ENCODE measurements at regions of chr12 and their contacts with region 1.

Region 1: GRCh38 chr12:89098441-89099112 is 253.7 kb downstream of the DUSP6 start:
- DNase-seq: no peak

Region 2: GRCh38 chr12:89156862-89157262 is 58.3 kb after region 1 on chr12:
- intact Hi-C with region 1: loop called in 1 of 2 experiments (anchors 2 kb)
- DNase-seq: no peak

Region 3: DNA sequence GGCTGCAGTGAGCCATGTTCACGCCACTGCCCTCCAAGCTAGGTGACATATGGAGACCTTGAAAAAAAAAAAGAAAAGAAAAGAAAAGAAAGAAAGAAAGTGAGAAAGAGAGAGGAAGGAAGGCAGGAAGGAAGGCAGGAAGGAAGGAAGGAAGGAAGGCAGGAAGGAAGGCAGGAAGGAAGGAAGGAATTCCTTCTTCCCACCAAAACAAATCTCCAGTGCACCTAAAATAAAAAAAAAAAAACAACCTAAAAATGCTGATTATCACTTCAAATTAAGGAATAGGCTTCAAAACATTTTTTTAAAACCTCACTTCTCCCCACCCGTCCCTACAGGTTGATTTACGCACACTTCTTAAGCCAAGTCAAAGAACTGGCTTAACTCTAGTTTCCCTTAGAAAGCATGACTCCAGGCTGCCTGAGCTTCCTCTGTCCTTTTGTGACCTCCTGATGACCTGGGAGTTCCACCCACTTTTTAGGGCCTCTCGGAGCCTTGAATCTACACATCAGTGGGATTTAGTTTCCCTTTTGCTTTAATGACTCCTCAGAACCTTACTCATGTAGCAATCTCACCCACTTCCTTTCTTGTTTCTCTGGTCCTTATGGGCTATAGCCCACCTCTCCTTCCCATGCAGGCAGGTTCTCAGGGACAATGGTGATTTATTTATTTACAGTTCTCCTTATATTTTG is 235.1 kb after region 1 on chr12:
- intact Hi-C with region 1: no loop called
- DNase-seq: no peak

Measured in posterior vena cava (tissue), 2 donors.